ENCODE measurements at regions of chr11 and their contacts with region 1.

Region 1: DNA sequence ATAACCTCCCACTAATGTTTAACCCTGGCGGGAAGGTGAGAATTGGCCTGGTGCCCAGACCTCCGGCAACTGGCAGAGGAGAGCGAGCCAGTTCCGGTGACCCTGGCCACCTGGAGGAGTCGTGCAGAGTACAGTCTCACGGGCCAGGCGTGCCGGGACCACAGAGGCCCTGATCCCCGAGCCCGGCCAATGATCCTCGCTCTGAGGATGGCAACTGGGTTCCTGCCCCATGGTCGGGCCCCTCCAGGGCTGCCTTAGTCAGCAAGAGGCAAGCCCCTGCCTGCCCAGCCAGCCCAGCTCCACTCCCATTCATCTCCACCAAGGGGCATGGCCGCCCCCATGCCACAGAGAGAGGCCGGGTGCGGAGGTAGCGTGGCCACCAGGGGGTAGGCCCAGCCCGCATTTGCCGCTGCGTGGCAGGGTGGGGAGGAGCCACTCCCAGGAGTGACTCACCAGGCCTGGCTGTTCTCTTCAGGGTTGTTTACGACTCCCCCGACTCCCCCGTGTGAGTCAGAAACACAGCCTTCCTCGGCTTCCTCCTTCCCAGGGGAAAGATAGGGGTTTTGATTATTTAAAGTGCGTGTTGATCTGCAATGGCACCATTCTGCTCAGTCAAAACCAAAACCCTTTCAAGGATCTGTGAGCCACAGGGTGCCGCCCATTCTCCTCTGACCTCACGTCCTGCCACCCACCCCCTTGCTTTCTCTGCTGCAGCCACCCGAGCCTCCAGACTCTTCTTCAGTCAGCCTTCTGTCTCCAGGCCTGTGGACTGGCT is at the start of gene SLC25A45:
- DNase-seq: peak; percentile 90
- H3K4me3 Mint-ChIP-seq: peak within 1 kb of the TSS; percentile 86
- H3K27ac Mint-ChIP-seq: peak within 1 kb of the TSS; percentile 99
- H3K4me1 Mint-ChIP-seq: peaks cover 40% of the 10 kb centered on the region
- H3K27me3 Mint-ChIP-seq: no peaks in the 10 kb centered on the region
- total RNA-seq, gene SLC25A45: 14.6 and 16.3 TPM in 2 replicates

Region 2: GRCh38 chr11:65440831-65441499 is 58.7 kb after region 1 on chr11:
- intact Hi-C with region 1: no loop called
- DNase-seq: no peak
- H3K4me3 Mint-ChIP-seq: no peak overlapping the region
- H3K27ac Mint-ChIP-seq: peak overlapping the region; percentile 88
- H3K4me1 Mint-ChIP-seq: peaks cover 46% of the 10 kb centered on the region
- H3K27me3 Mint-ChIP-seq: no peaks in the 10 kb centered on the region

Region 3: DNA sequence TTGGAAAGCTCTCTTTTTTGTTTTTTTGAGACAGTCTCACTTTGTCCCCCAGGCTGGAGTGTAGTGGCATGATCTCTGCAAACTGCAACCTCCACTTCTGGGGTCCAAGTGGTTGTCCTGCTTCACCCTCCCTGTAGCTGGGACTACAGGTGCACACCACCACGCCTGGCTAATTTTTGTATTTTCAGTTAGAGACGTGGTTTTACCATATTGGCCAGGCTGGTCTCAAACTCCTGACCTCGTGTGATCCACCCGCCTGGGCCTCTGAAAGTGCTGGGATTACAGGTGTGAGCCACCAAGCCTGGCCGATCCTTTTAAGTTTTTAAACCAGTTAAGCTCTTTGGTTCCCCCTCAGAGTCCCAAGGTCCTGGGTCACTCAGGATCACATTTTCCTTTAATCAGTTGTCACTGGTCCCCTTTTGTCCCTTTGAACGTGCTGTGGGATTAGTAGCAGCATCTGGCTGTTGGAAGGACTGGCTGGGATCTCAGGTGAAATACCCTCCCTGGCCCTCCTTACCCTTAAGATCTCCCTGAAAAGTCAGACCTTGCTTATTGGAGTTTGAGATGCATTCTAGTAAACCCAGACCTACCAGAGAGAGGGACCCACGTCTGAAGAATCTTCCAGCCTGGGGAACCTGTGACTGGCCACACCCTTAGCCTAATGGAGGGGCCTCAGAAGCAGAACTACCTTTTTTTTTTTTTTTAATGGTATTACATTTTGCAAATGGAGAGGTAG is 124.7 kb after region 1 on chr11:
- intact Hi-C with region 1: loop called (anchors 1 kb)
- DNase-seq: no peak
- H3K4me3 Mint-ChIP-seq: peak overlapping the region; percentile 49
- H3K27ac Mint-ChIP-seq: peak overlapping the region; percentile 59
- H3K4me1 Mint-ChIP-seq: peaks cover 43% of the 10 kb centered on the region
- H3K27me3 Mint-ChIP-seq: no peaks in the 10 kb centered on the region

Measured in activated T-helper 2 cell treated with anti-CD3 and anti-CD28 coated beads, Interferon-gamma antibody, Interleukin-2, Interleukin-4, amounts not matched to agents 10 μg/mL and 5 μg/mL and 100 μg/mL, durations not matched to agents 14 hours and 24 hours and 36 hours (primary cell).